ENCODE measurements at regions of chr16 and their contacts with region 1.

Region 1: DNA sequence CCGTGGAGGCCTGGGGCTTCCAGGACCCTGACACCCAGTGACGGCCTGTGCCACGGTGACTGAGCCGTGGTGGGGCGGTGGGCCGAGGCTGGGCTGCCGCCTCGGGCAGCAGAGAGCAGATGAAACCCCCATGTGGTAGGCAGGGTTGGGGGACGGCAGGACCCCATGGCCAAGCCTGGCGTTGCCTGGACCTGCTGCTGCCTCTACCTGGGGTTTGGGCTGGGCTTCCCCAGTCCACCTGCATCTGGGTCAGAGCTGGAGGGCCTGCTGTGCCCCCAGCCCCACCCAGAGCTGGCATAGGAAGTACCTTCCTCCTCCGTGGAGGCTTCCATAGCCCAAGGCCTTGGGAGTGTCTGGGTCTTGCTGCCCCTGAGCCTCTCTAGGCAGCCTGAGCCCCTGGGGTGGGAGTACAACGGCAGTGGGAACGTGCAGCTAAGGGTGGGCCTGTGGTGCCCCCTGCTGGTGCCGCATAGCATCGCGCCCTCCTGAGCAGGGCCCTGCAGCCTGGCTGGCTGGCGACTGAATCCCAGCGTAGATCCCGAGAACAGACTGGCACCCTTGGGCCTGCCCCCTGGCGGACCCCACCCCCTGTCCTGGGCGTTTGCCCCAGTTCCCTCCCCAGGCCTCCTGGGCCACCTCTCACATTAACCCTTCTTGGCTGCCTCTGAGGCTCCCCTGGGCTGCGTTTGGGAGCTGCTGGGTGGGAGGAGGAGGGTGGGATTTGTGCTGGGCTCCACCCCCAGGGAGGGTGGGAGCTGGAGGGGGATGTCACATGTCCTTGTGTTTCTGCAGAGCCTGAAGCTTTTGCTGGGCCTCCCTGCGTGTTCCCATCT is 12.6 kb upstream of the ATP6V0C start:
- DNase-seq: peak; percentile 83
- H3K4me3 ChIP-seq: no peak overlapping the region
- H3K27ac ChIP-seq: no peak overlapping the region
- H3K4me1 ChIP-seq: peaks cover 10% of the 10 kb centered on the region
- CTCF ChIP-seq: peak; percentile 98

Region 2: DNA sequence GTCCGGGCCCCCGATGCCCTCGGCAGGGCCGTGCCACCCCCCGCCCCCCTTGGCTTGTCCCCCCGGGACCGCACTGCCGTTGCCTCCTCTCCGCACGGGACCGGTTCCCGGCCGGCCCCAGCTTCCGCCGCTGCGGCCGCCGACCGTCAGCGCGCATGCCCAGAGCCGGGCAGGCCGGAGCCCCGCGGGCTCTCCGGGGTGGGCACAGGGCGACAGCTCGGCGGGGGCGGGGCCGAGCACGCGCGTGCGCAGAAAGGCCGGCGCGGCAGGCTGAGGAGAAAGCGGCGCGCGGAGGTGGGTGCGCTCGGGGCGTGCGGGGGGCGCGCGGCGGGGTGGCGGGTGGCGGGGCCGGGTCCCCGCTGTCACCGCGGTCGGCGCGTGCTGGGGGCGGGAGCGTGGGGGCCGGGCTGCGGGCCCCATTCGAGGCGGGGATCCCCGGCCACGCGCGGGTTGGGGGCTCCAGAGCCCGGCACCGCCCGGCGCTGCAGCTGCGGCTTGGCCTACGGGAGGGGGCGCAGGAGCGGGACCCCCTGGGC is 26.2 kb before region 1 on chr16 and contains the start of gene TBC1D24:
- CTCF ChIA-PET with region 1: no interaction called
- POLR2A ChIA-PET with region 1: interaction called, 3 read pairs
- intact Hi-C with region 1: loop called (anchors 2 kb)
- DNase-seq: peak; percentile 91
- H3K4me3 ChIP-seq: peak within 1 kb of the TSS; percentile 92
- H3K27ac ChIP-seq: peak within 1 kb of the TSS; percentile 86
- H3K4me1 ChIP-seq: peaks cover 51% of the 10 kb centered on the region
- CTCF ChIP-seq: no peak
- total RNA-seq, gene TBC1D24: 19.8 and 23.4 TPM in 2 replicates

Measured in OCI-LY7 (cell line).